ENCODE measurements at regions of chr22 and their contacts with region 1.

Region 1: GRCh38 chr22:27512283-27512761 is 289.2 kb downstream of the MN1 start:
- DNase-seq: peak; percentile 99
- H3K4me3 ChIP-seq: no peak overlapping the region
- H3K27ac ChIP-seq: peak overlapping the region; percentile 83
- H3K4me1 ChIP-seq: peaks cover 29% of the 10 kb centered on the region
- H3K27me3 ChIP-seq: no peaks in the 10 kb centered on the region
- CTCF ChIP-seq: no peak
- POLR2A ChIP-seq: no peak

Region 2: GRCh38 chr22:27474711-27475547 is 37.4 kb before region 1 on chr22:
- CTCF ChIA-PET with region 1: interaction called, 3 read pairs
- POLR2A ChIA-PET with region 1: interaction called, 4 read pairs
- dilution Hi-C with region 1: no loop called
- intact Hi-C with region 1: loop called (anchors 1 kb)
- DNase-seq: peak; percentile 76
- H3K4me3 ChIP-seq: peak overlapping the region in 1 of 3 experiments; percentile 11
- H3K27ac ChIP-seq: peak overlapping the region; percentile 13
- H3K4me1 ChIP-seq: peaks cover 22% of the 10 kb centered on the region
- H3K27me3 ChIP-seq: peaks cover 0 to 2% of the 10 kb centered on the region in 2 experiments
- CTCF ChIP-seq: no peak
- POLR2A ChIP-seq: no peak

Region 3: DNA sequence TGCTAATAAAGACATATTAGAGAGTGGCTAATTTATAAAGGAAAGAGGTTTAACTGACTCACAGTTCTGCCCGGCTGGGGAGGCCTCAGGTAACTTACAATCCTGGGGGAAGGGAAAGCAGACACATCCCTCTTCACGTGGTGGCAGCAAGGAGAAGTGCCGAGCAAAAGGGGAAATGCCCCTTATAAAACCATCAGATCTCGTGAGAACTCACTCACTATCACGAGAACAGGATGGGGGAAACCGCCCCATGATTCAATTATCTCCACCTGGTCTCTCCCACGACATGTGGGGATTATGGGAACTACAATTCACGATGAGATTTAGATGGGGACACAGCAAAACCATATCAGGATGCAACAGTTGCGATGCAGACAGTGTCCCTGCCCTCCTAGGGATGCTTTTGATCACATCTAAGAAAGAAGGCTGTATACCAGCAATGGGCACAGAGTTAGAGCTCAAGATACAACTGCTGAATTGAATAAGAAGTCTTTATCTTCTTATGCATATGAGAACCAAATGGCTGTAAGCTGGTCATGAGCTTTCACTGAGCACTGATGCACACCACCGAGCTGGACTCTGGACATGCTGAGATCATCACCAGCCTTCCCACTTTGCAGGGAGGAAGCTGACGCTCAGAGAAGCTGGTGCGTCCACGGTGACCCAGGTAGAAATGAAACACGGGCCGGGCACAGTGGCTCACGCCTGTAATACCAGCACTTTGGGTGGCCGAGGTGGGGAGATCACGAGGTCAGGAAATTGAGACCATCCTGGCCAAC is 34.0 kb after region 1 on chr22:
- CTCF ChIA-PET with region 1: no interaction called
- POLR2A ChIA-PET with region 1: no interaction called
- dilution Hi-C with region 1: no loop called
- intact Hi-C with region 1: no loop called
- DNase-seq: no peak
- H3K4me3 ChIP-seq: no peak overlapping the region
- H3K27ac ChIP-seq: no peak overlapping the region
- H3K4me1 ChIP-seq: no peaks in the 10 kb centered on the region
- H3K27me3 ChIP-seq: peaks cover 2% of the 10 kb centered on the region in 2 experiments
- CTCF ChIP-seq: no peak
- POLR2A ChIP-seq: no peak

Region 4: DNA sequence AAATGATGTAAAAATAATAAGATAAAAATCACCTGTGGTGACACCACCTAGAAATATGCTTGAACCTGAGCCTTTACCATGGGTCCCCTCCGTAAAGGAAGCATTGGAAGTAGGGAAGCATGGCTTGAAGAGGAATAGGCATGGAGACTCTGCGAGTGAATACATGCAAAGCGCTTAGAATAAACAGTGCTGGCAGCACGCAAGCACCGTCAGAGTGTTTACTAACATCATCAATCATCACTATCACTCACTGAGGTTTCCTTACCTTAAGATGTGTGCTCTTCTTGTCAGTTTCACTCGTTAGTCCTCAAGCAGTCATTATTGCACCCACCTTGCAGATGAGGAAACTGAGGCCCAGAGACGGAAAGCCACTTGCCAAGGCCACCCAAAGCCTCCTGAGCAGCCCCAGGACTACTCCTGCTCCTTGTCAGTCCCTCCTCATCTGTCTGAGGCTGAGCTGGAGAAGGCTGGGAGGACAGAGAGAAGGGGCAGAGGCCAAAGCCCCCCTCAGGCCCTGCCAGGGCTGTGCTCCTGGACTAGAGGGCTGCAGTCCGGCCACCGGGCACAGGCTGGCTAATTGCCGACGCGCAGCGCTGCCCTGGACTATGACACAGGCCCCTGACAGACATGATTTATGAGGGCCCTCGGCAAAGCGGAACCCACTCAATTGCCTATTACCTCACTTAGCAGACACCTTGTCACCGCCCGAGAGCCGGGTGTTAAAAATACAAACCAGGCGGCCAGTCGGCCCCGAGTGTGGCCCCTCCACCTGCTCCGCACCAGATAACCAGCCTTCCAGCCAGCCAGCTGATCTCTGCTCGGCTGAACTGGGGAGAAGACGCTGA is 120.4 kb after region 1 on chr22:
- CTCF ChIA-PET with region 1: no interaction called
- POLR2A ChIA-PET with region 1: no interaction called
- dilution Hi-C with region 1: no loop called
- intact Hi-C with region 1: no loop called
- DNase-seq: no peak
- H3K4me3 ChIP-seq: no peak overlapping the region
- H3K27ac ChIP-seq: no peak overlapping the region
- H3K4me1 ChIP-seq: no peaks in the 10 kb centered on the region
- H3K27me3 ChIP-seq: peaks cover 3 to 5% of the 10 kb centered on the region in 2 experiments
- CTCF ChIP-seq: no peak
- POLR2A ChIP-seq: no peak